Naive thymus-derived CD4-positive, alpha-beta T cell (primary cell): ENCODE measurements at regions of chr5 and their contacts with region 1.

Region 1: GRCh38 chr5:75142566-75143136 is 90.3 kb upstream of the GCNT4 start:
- DNase-seq: no peak
- ATAC-seq: no peak
- H3K4me3 ChIP-seq: no peak overlapping the region
- H3K4me3 Mint-ChIP-seq: no peak overlapping the region
- H3K27ac ChIP-seq: no peak overlapping the region
- H3K27ac Mint-ChIP-seq: no peak overlapping the region
- H3K4me1 ChIP-seq: no peaks in the 10 kb centered on the region
- H3K4me1 Mint-ChIP-seq: peaks cover 2 to 29% (median 15%) of the 10 kb centered on the region in 7 donors
- H3K27me3 ChIP-seq: peaks cover 0 to 3% of the 10 kb centered on the region in 2 donors
- H3K27me3 Mint-ChIP-seq: no peaks in the 10 kb centered on the region

Region 2: DNA sequence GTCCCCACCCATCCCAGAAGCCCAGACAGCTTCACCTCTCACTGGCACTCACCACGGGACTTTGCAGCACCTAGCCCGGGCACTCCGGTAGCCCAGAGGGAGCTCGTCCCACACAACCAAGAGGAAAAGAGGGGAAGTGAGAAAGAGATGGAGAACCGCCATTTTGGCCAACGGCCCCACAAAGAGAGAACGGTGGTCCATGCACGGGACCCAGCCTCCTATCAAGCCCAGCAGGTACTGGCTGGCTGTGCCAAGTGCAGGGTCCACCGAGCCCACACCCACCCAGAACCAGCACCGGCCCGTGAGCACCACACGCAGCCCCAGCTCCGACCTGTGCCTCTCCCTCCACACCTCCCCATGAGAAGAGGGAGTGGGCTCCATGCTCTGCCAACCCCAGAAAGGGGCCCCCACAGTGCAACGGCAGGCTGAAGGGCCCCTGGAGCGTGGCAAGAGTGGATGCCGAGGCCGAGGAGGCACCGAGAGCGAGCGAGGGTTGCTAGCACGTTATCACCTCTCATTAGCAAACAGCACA is 11.8 kb before region 1 on chr5:
- CTCF ChIA-PET with region 1: no interaction called
- POLR2A ChIA-PET with region 1: no interaction called
- intact Hi-C with region 1: loop called in 1 of 2 experiments (anchors 2 kb)
- DNase-seq: no peak
- ATAC-seq: no peak
- H3K4me3 ChIP-seq: no peak overlapping the region
- H3K4me3 Mint-ChIP-seq: no peak overlapping the region
- H3K27ac ChIP-seq: no peak overlapping the region
- H3K27ac Mint-ChIP-seq: no peak overlapping the region
- H3K4me1 ChIP-seq: no peaks in the 10 kb centered on the region
- H3K4me1 Mint-ChIP-seq: no peaks in the 10 kb centered on the region
- H3K27me3 ChIP-seq: no peaks in the 10 kb centered on the region
- H3K27me3 Mint-ChIP-seq: no peaks in the 10 kb centered on the region

Region 3: DNA sequence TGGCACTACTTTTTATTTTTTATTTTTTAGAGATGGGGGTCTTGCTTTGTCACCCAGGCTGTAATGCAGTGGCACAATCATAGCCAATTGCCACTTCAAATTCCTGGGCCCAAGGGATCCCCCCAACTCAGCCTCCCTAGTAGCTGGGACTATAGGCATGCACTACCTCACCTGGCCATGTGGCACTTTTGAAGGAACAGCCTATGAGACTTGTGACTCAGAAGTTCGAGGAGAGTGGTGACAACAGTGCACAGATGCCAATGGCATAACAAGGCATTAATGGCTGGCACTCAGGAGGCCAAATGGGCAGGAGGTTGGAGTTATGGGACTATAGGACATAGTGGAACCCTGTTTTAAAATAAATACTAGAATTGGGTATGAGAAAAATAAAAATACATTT is 60.3 kb after region 1 on chr5:
- CTCF ChIA-PET with region 1: no interaction called
- POLR2A ChIA-PET with region 1: no interaction called
- intact Hi-C with region 1: no loop called
- DNase-seq: no peak
- ATAC-seq: no peak
- H3K4me3 ChIP-seq: no peak overlapping the region
- H3K4me3 Mint-ChIP-seq: no peak overlapping the region
- H3K27ac ChIP-seq: no peak overlapping the region
- H3K27ac Mint-ChIP-seq: no peak overlapping the region
- H3K4me1 ChIP-seq: no peaks in the 10 kb centered on the region
- H3K4me1 Mint-ChIP-seq: peaks cover 0 to 1% (median 0%) of the 10 kb centered on the region in 7 donors
- H3K27me3 ChIP-seq: no peaks in the 10 kb centered on the region
- H3K27me3 Mint-ChIP-seq: no peaks in the 10 kb centered on the region